GM12878 (cell line): ENCODE measurements at regions of chr13 and their contacts with region 1.

Region 1: DNA sequence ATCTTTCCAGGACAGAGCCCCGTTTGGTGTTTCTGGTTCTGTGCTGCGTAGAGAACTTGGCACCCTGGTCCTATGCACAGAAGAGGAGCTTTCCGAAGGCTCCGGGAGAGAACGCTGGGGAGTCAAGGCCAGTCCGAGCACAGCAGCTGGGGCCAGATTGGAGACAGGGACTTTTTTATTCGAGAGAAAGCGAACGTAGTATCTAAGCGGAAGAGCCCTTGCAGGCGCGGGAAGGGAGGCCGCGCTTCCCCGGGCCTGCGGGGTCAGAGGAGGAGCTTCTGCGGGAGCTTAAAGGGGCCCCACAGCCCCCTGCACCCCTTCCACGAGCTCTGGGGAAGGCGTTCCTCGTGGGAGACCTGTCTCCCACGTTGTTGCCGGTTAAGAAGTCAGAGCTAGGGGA is 48.6 kb upstream of the ARHGEF7 start:
- DNase-seq: no peak
- ATAC-seq: no peak
- H3K4me3 ChIP-seq: no peak overlapping the region
- H3K27ac ChIP-seq: no peak overlapping the region
- H3K4me1 ChIP-seq: peaks cover 4% of the 10 kb centered on the region
- H3K27me3 ChIP-seq: peaks cover 0 to 5% of the 10 kb centered on the region in 2 experiments; a peak in 1 of 4 replicates
- CTCF ChIP-seq: no peak
- EP300 ChIP-seq: no peak
- POLR2A ChIP-seq: no peak
- RAD21 ChIP-seq: no peak

Region 2: DNA sequence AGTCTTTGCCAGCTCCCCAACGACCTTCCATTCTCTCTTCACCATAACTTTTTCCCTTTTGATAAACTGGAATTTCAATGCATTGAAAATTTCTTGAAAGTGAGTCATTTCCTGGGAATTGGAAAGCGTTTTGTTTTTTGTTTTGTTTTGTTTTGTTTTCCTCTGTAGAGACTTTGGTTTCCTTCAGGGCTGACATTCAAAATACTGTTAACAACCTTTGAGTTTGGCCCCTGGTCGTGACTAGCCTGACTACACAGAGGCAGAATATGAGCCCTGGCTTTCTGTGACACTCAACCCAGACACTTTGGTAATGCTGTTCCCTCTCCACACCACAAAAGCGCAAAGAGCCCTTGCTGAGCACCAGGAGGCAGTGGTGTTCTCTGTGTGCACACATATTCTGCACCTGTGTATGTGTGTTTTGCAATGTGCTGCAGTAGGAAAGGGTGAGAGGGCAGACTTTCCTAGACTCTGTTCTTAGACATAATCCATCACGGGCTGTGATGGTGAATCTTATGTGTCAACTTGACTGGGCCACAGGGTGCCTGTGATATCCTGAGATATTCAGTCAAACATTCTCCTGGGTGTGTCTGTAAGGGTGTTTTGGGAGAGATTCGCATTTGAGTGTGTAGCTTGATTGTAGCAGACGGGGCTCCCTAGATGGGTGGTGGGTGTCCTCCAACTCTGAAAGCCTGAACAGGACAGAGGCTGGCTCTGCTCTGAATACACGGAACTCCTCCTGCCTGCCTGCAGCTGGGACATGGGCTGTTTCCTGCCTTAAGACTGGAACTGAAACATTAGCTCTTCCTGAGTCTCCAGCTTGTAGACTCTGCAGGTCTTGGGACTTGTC is 122.2 kb before region 1 on chr13:
- CTCF ChIA-PET with region 1: interaction called, 11 read pairs
- POLR2A ChIA-PET with region 1: no interaction called
- RAD21 ChIA-PET with region 1: interaction called, 6 read pairs
- SMC1A ChIA-PET with region 1: interaction called, 4 read pairs
- in situ Hi-C with region 1: no loop called
- intact Hi-C with region 1: no loop called
- DNase-seq: no peak
- ATAC-seq: peak; percentile 86
- H3K4me3 ChIP-seq: no peak overlapping the region
- H3K27ac ChIP-seq: no peak overlapping the region
- H3K4me1 ChIP-seq: peaks cover 8% of the 10 kb centered on the region; the same call in 1 of the 2 replicates
- H3K27me3 ChIP-seq: no peaks in the 10 kb centered on the region
- CTCF ChIP-seq: peak; percentile 48 to 66 (median 63); a peak in 5 of 6 replicates
- EP300 ChIP-seq: no peak
- POLR2A ChIP-seq: no peak
- RAD21 ChIP-seq: peak; percentile 92

Region 3: DNA sequence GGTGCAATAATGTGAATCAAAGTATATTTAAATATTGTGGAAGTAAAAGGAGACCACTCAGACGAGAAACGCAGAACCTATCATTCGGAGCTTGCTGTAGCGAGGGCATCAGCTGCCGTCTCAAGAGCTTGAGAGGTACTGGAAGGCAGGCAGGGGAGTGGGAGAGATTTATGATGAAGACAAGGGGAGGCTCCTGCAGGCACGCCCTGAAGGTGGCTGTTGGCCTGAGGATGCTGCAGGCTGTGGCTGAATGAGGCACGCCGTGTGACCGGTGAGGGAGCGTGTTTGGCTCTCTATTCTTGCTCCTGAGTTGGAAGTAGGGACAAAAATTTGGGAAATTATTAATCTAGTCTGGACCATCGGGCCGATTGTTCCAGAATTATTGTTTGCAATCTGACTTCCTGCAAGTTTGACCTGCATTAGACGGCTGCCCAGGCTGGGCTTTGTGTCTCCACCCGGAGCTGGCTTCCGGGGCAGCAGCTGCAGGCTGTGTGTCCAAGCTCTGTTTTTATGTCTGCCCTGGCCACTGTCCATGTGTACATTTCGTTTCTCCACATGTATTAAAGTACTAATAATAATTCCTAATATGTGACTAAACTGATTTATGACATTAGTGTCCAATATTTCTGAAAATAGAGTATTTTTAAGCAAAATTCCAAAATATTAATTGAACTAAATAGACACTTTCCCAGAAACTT is 60.6 kb before region 1 on chr13:
- CTCF ChIA-PET with region 1: no interaction called
- POLR2A ChIA-PET with region 1: no interaction called
- RAD21 ChIA-PET with region 1: no interaction called
- SMC1A ChIA-PET with region 1: no interaction called
- in situ Hi-C with region 1: no loop called
- intact Hi-C with region 1: no loop called
- DNase-seq: no peak
- ATAC-seq: no peak
- H3K4me3 ChIP-seq: no peak overlapping the region
- H3K27ac ChIP-seq: no peak overlapping the region
- H3K4me1 ChIP-seq: no peaks in the 10 kb centered on the region
- H3K27me3 ChIP-seq: no peaks in the 10 kb centered on the region; a peak in 1 of 4 replicates
- CTCF ChIP-seq: no peak
- EP300 ChIP-seq: no peak
- POLR2A ChIP-seq: no peak
- RAD21 ChIP-seq: no peak

Region 4: GRCh38 chr13:111184458-111185401 is 118.2 kb after region 1 on chr13:
- CTCF ChIA-PET with region 1: interaction called, 20 read pairs
- POLR2A ChIA-PET with region 1: interaction called, 3 read pairs
- RAD21 ChIA-PET with region 1: interaction called, 5 read pairs
- SMC1A ChIA-PET with region 1: interaction called, 4 read pairs
- in situ Hi-C with region 1: no loop called
- intact Hi-C with region 1: no loop called
- DNase-seq: peak; percentile 93
- ATAC-seq: peak; percentile 91
- H3K4me3 ChIP-seq: peak overlapping the region; percentile 67
- H3K27ac ChIP-seq: peak overlapping the region; percentile 70
- H3K4me1 ChIP-seq: peaks cover 47% of the 10 kb centered on the region
- H3K27me3 ChIP-seq: no peaks in the 10 kb centered on the region
- CTCF ChIP-seq: no peak
- EP300 ChIP-seq: peak; percentile 59 to 77; a peak in 3 of 4 replicates
- POLR2A ChIP-seq: peak; percentile 58
- RAD21 ChIP-seq: no peak

Region 5: DNA sequence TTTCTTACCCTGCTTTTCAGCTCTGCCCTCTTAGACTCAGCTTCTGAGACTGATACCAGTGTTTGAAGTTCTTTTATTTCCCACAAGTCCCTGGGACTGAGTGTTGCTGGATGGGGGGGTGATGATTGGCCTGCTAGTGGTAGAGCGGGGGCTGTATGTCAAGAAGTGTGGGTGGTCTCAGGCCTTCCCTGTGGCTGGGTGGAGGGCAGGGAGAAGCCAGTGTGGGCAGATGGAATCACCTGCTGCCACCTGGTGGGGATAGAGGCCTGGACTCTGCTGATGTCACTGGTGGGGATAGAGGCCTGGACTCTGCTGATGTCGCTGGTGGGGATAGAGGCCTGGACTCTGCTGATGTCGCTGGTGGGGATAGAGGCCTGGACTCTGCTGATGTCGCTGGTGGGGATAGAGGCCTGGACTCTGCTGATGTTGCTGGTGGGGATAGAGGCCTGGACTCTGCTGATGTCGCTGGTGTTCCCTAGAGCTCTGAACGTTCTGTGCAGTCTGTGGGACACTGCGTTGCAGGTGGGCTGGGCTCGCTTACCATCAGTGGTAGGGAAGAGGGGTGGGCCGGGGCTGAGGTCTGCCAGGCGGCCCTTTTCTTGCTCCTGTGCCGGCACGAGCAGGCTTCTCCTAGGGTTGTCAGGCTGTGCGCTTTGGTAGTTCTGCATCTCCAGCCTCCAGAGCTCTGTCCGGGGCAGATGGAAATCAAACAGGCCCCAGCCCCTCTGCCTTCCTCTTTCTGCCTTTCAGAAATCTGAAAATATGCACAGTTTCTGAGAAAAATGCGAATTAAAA is 149.8 kb after region 1 on chr13:
- CTCF ChIA-PET with region 1: interaction called, 99 read pairs
- POLR2A ChIA-PET with region 1: no interaction called
- RAD21 ChIA-PET with region 1: interaction called, 43 read pairs
- SMC1A ChIA-PET with region 1: interaction called, 45 read pairs
- in situ Hi-C with region 1: loop called (anchors 5 kb)
- intact Hi-C with region 1: no loop called
- DNase-seq: no peak
- ATAC-seq: peak; percentile 91
- H3K4me3 ChIP-seq: no peak overlapping the region
- H3K27ac ChIP-seq: no peak overlapping the region
- H3K4me1 ChIP-seq: peaks cover 7% of the 10 kb centered on the region
- H3K27me3 ChIP-seq: no peaks in the 10 kb centered on the region
- CTCF ChIP-seq: peak; percentile 52 to 55 (median 53); a peak in 5 of 6 replicates
- EP300 ChIP-seq: no peak
- POLR2A ChIP-seq: no peak
- RAD21 ChIP-seq: peak; percentile 52; the same call in 1 of the 2 replicates

Region 6: DNA sequence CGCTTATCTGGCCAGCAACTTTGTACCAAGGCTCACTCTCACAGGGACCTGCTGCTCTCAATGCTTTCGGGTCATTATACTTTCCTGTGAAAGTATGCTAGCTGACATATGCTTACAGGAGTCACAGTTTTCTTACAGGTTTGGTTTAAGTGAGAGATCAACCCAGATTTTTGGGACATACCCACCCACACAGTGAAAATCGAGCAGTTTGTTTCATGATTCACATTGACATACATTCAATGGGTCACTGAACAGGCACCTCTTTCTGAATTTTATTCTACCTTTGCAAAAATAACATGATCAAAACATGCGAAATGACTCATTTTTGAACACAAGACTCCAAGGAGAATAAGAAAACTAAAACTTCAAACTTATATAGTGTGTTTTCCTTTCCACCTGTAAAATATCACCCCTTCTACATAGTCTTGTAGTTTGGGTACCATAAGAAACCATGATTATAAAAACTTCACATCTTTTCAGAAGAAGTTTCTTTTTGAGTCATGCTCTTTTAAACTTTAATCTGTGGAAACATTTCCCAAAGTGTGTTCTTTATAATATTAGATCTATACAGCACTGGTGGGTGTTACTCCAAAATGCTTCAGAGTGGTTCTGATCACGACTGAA is 209.6 kb after region 1 on chr13:
- CTCF ChIA-PET with region 1: interaction called, 16 read pairs
- POLR2A ChIA-PET with region 1: no interaction called
- RAD21 ChIA-PET with region 1: interaction called, 4 read pairs
- SMC1A ChIA-PET with region 1: interaction called, 4 read pairs
- in situ Hi-C with region 1: no loop called
- intact Hi-C with region 1: no loop called
- DNase-seq: no peak
- ATAC-seq: no peak
- H3K4me3 ChIP-seq: no peak overlapping the region
- H3K27ac ChIP-seq: no peak overlapping the region
- H3K4me1 ChIP-seq: no peaks in the 10 kb centered on the region
- H3K27me3 ChIP-seq: no peaks in the 10 kb centered on the region
- CTCF ChIP-seq: no peak
- EP300 ChIP-seq: no peak
- POLR2A ChIP-seq: no peak
- RAD21 ChIP-seq: no peak

Region 7: DNA sequence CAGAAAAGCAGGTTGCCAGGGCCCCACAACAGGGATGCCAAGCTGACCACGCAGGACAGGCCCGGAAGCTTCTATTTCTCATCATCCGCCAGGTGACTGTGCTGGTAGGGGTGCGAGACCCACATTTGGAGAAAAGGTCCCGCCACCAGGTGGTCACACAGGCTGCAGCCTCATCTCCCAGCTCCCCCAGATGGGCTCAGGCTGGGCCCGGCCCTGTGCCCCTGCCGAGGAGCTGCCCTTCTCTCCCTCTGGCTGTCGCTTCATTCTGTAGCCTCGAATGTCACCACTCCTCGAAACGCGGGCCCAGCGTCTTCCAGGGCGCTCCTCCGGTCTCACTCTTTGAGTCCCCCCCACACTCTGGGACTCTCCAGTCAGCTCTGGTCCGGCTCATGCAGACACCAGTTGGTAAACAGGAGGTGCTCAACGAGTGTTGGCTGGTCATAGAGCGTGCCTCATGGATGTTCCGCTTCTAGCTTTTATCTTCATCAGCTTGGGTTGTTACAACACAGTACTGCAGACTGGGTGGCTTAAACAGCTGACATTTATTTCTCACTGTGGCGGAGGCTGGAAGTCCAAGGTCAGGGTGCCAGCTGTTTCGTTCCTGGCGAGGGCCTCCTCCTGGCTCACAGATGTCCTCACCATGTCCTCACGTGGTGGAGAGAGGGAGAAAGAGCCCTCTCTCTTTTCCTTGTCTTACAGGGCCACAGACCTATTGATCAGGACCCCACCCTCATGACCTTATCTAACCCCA is 341.0 kb after region 1 on chr13:
- CTCF ChIA-PET with region 1: interaction called, 26 read pairs
- POLR2A ChIA-PET with region 1: no interaction called
- RAD21 ChIA-PET with region 1: interaction called, 10 read pairs
- SMC1A ChIA-PET with region 1: interaction called, 4 read pairs
- in situ Hi-C with region 1: no loop called
- intact Hi-C with region 1: loop called (anchors 5 kb)
- DNase-seq: no peak
- ATAC-seq: no peak
- H3K4me3 ChIP-seq: no peak overlapping the region
- H3K27ac ChIP-seq: no peak overlapping the region
- H3K4me1 ChIP-seq: no peaks in the 10 kb centered on the region
- H3K27me3 ChIP-seq: no peaks in the 10 kb centered on the region; a peak in 2 of 4 replicates
- CTCF ChIP-seq: no peak
- EP300 ChIP-seq: no peak
- POLR2A ChIP-seq: no peak
- RAD21 ChIP-seq: no peak